B cell (primary cell): ENCODE measurements at regions of chr7 and their contacts with region 1.

Region 1: DNA sequence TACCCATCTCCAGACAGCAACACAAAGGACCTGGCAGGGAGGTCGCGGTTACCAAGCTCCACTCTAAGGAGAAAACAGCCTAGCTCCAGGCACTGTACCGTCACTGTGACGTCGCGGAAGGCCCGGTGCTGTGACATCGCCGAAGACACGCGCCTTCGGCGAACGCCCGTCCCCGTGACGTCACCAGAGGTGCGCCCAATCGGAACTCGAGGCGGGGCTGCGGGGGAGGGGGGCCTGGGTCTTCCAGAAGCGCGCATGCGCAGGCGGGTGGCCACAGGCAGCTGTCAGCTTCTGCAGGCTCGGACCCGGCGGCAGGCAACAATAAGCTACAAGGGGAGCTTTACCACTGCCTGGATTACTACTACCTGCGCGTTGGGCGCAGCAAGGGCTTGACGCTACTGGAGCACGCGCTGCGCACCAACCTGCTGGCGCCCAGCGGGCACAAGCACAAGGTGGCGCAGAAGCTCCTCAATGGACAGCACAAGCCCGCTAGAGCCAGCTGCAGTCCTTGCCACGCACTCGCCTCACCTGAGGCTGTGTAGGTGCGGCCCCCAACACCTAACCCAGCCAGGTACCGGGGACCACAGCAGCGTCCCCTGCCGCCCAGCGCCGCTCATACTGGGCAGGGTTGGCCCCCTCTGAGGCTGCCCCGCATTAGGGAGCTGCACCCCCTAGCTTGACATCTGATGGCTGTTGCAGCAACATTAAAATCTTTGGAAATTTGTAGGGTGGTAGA is 208.4 kb downstream of the TPST1 start:
- DNase-seq: peak; percentile 91
- ATAC-seq: peak; percentile 76
- H3K4me3 ChIP-seq: peak overlapping the region; percentile 0 to 66 (median 57)
- H3K4me3 Mint-ChIP-seq: peak overlapping the region; percentile 81
- H3K27ac ChIP-seq: no peak overlapping the region
- H3K27ac Mint-ChIP-seq: peak overlapping the region; percentile 65
- H3K4me1 ChIP-seq: peaks cover 8 to 16% of the 10 kb centered on the region in 2 donors
- H3K4me1 Mint-ChIP-seq: peaks cover 15% of the 10 kb centered on the region
- H3K27me3 ChIP-seq: no peaks in the 10 kb centered on the region
- H3K27me3 Mint-ChIP-seq: no peaks in the 10 kb centered on the region
- CTCF ChIP-seq: peak; percentile 38

Region 2: GRCh38 chr7:66075590-66076461 is 337.7 kb before region 1 on chr7 and contains the start of gene ASL:
- CTCF ChIA-PET with region 1: no interaction called
- POLR2A ChIA-PET with region 1: no interaction called
- intact Hi-C with region 1: loop called (anchors 10 kb)
- DNase-seq: peak; percentile 90
- ATAC-seq: peak; percentile 98
- H3K4me3 ChIP-seq: peak within 1 kb of the TSS; percentile 54 to 93 (median 77)
- H3K4me3 Mint-ChIP-seq: peak within 1 kb of the TSS; percentile 90
- H3K27ac ChIP-seq: peak within 1 kb of the TSS; percentile 55 to 82
- H3K27ac Mint-ChIP-seq: peak within 1 kb of the TSS; percentile 76
- H3K4me1 ChIP-seq: peaks cover 6 to 18% of the 10 kb centered on the region in 2 donors
- H3K4me1 Mint-ChIP-seq: peaks cover 17% of the 10 kb centered on the region
- H3K27me3 ChIP-seq: no peaks in the 10 kb centered on the region
- H3K27me3 Mint-ChIP-seq: no peaks in the 10 kb centered on the region
- CTCF ChIP-seq: no peak
- total RNA-seq, gene ASL: 48.7 and 48.8 TPM in 2 replicates